ENCODE measurements at regions of chr5 and their contacts with region 1.

Region 1: DNA sequence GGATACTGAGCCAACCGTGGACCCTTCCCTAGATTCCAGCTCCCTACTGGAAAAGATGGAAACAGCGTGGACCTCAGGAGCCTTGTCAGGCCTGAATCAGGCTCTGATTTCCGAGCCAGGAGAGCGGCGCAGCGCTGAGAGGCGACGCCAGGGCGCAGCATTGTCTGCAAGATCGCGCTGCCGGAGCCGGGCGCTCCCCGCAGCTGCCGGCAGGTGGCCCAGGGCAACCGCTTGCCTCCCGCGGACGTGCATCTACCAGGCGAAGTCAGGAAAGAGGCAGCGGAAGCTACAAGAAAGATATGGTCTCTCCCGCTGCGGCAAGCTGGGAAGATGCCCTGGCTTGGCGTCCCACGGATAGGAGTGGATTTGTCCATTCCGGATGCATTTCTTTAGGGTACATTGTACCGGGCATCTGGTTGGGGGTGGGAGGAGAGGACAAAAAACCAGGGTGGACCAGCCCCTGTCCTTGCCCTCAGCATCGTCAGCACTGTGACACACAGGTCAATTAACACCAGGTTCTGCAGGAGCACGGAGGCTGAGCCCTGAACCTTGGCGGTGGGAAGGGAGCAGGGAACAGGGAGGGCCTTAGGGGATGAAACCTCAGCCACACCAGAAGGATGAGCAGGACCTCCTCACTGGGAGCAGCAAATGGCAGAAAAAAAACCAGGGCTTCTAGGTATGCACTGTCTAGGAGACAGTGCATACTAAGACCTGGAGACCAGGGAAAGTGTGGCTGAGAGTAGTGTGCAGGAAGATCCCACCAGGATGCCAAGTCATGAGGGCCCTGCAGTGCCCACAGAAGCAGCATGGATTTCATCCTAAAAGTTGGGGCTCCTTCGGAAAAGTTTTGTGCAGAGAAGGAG is 55.9 kb downstream of the SFXN1 start:
- DNase-seq: peak; percentile 89 to 92
- H3K4me3 ChIP-seq: no peak overlapping the region
- H3K27ac ChIP-seq: no peak overlapping the region
- H3K4me1 ChIP-seq: peaks cover 0 to 12% (median 4%) of the 10 kb centered on the region in 4 donors
- H3K27me3 ChIP-seq: no peaks in the 10 kb centered on the region
- CTCF ChIP-seq: peak; percentile 61 to 100 (median 94)
- EP300 ChIP-seq: no peak
- POLR2A ChIP-seq: no peak

Region 2: GRCh38 chr5:175718401-175719108 is 184.3 kb after region 1 on chr5:
- intact Hi-C with region 1: loop called (anchors 10 kb)
- DNase-seq: peak; percentile 80 to 91
- H3K4me3 ChIP-seq: no peak overlapping the region
- H3K27ac ChIP-seq: peak overlapping the region; percentile 37 to 71 (median 56)
- H3K4me1 ChIP-seq: peaks cover 0 to 19% (median 0%) of the 10 kb centered on the region in 4 donors
- H3K27me3 ChIP-seq: peaks cover 0 to 19% (median 0%) of the 10 kb centered on the region in 3 donors
- CTCF ChIP-seq: peak in 6 of 7 experiments; percentile 49 to 90 (median 78)
- EP300 ChIP-seq: no peak
- POLR2A ChIP-seq: no peak